Activated B cell treated with CpG ODN at 0.5 μM for 24 hours (primary cell): ENCODE measurements at regions of chr9 and their contacts with region 1.

Region 1: GRCh38 chr9:5437254-5438216 is at the start of gene PLGRKT:
- DNase-seq: peak; percentile 82
- ATAC-seq: peak; percentile 78
- H3K4me3 Mint-ChIP-seq: peak within 1 kb of the TSS; percentile 96
- H3K27ac Mint-ChIP-seq: peak within 1 kb of the TSS; percentile 100
- H3K4me1 Mint-ChIP-seq: peaks cover 59% of the 10 kb centered on the region
- H3K27me3 Mint-ChIP-seq: no peaks in the 10 kb centered on the region
- CTCF ChIP-seq: no peak
- total RNA-seq, gene PLGRKT: 57.1 and 59.7 TPM in 2 replicates

Region 2: DNA sequence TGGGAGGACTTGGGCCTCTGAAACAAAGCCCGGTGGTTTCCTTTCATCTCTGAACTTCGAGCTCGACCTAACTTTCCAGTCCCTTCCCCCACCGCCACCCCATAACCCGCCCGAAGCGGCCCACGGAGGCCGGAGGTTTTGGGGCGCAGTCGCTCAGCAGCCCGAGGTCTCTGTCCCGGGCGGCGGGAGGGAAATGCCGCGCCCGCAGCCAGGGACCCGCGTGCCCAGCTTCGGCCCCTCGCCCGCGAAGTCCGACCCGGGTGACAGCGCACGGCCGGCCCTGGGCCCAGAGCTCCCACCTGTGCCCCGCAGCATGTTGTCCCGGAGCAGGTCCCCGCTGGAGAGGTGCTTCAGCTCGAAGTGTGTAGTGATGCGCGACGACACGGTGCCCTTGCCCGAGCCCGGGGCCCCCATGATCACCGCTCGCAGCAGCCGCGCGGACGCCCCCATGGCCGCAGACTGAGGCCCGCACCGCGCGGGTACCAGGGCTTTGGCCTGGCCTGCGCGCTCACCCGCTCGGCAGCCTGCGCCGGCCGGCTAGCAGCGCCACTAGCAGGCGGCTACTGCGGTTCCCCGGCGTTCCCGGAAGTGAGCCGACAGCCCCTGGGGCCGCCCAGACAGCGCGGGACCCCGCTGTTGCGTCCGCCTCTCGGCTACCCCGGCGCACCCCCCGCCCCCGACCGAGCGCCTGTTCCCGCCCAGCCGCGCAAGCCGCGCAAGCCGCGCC is 696.7 kb before region 1 on chr9 and contains the start of gene AK3:
- CTCF ChIA-PET with region 1: no interaction called
- POLR2A ChIA-PET with region 1: interaction called, 3 read pairs
- intact Hi-C with region 1: loop called (anchors 5 kb)
- DNase-seq: peak; percentile 79
- ATAC-seq: peak; percentile 93
- H3K4me3 Mint-ChIP-seq: peak within 1 kb of the TSS; percentile 90
- H3K27ac Mint-ChIP-seq: peak within 1 kb of the TSS; percentile 83
- H3K4me1 Mint-ChIP-seq: peaks cover 30% of the 10 kb centered on the region
- H3K27me3 Mint-ChIP-seq: no peaks in the 10 kb centered on the region
- CTCF ChIP-seq: no peak
- total RNA-seq, gene AK3: 14.5 and 16.9 TPM in 2 replicates

Region 3: GRCh38 chr9:5186416-5187169 is 250.9 kb before region 1 on chr9:
- CTCF ChIA-PET with region 1: interaction called, 87 read pairs
- POLR2A ChIA-PET with region 1: interaction called, 16 read pairs
- intact Hi-C with region 1: loop called (anchors 1 kb)
- DNase-seq: no peak
- ATAC-seq: peak; percentile 81
- H3K4me3 Mint-ChIP-seq: no peak overlapping the region
- H3K27ac Mint-ChIP-seq: no peak overlapping the region
- H3K4me1 Mint-ChIP-seq: peaks cover 12% of the 10 kb centered on the region
- H3K27me3 Mint-ChIP-seq: no peaks in the 10 kb centered on the region
- CTCF ChIP-seq: no peak

Region 4: DNA sequence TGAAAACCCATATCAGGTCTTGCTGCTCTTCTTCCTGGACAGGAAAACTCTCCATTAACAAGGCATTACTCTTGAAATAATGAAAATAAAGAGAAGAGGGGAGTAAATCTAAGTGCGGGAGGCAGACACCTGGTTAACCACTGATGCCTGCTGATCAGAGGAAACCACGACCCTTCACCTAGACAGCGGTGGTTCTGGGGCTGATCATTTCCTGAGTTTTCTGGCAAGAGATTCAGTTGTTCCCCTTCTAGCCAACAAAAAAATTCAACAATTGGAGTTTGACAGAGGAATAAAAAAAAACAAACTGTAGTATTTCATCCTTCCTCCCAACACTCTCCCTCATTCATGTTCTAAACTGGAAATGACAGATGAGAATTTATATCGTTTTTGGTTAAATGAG is 136.0 kb before region 1 on chr9:
- CTCF ChIA-PET with region 1: no interaction called
- POLR2A ChIA-PET with region 1: no interaction called
- intact Hi-C with region 1: no loop called
- DNase-seq: no peak
- ATAC-seq: no peak
- H3K4me3 Mint-ChIP-seq: no peak overlapping the region
- H3K27ac Mint-ChIP-seq: no peak overlapping the region
- H3K4me1 Mint-ChIP-seq: peaks cover 11% of the 10 kb centered on the region
- H3K27me3 Mint-ChIP-seq: no peaks in the 10 kb centered on the region
- CTCF ChIP-seq: no peak

Region 5: GRCh38 chr9:5459289-5459829 is 21.8 kb after region 1 on chr9:
- CTCF ChIA-PET with region 1: interaction called, 4 read pairs
- POLR2A ChIA-PET with region 1: interaction called, 15 read pairs
- intact Hi-C with region 1: no loop called
- DNase-seq: no peak
- ATAC-seq: peak; percentile 32
- H3K4me3 Mint-ChIP-seq: peak overlapping the region; percentile 20
- H3K27ac Mint-ChIP-seq: peak overlapping the region; percentile 67
- H3K4me1 Mint-ChIP-seq: peaks cover 46% of the 10 kb centered on the region
- H3K27me3 Mint-ChIP-seq: no peaks in the 10 kb centered on the region
- CTCF ChIP-seq: no peak

Region 6: GRCh38 chr9:5582835-5583195 is 145.3 kb after region 1 on chr9:
- CTCF ChIA-PET with region 1: interaction called, 56 read pairs
- POLR2A ChIA-PET with region 1: interaction called, 238 read pairs
- intact Hi-C with region 1: loop called (anchors 1 kb)
- DNase-seq: peak; percentile 45
- ATAC-seq: peak; percentile 62
- H3K4me3 Mint-ChIP-seq: peak overlapping the region; percentile 71
- H3K27ac Mint-ChIP-seq: peak overlapping the region; percentile 99
- H3K4me1 Mint-ChIP-seq: peaks cover 89% of the 10 kb centered on the region
- H3K27me3 Mint-ChIP-seq: no peaks in the 10 kb centered on the region
- CTCF ChIP-seq: no peak

Region 7: DNA sequence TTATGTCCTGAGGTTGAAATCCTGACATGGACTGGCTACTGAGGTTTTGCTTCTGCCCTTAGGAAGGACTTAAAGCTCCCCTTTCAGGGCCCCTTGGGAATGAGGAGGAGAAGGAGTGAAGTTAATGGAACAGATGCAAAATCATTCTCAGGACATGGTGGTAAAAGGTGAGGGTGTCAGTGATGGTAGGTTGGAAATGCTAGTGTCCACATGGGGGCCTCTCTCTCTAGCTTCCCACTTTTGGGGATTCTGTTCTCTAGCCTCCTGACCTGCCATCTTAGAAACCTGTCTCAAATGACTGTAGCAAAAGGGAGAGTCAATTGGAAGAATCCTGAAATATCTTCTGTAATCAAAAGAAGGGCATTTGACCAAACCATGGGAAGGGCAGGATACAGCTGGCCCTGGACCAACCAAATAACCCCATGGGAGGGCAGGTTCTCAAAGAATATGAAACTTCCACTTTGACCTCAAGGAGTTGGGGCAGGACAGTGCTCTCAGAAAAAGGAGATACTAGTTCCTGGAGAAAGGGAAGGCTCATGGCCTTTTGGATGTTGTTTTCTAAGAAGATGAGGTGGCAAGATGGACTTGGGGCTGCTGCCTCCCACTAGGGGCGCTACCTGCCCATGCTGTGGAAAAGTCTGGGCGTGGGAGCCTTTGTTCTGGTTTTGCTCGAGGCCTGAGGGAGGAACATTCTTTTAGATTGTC is 431.9 kb after region 1 on chr9:
- CTCF ChIA-PET with region 1: no interaction called
- POLR2A ChIA-PET with region 1: no interaction called
- intact Hi-C with region 1: no loop called
- DNase-seq: no peak
- ATAC-seq: no peak
- H3K4me3 Mint-ChIP-seq: no peak overlapping the region
- H3K27ac Mint-ChIP-seq: no peak overlapping the region
- H3K4me1 Mint-ChIP-seq: no peaks in the 10 kb centered on the region
- H3K27me3 Mint-ChIP-seq: no peaks in the 10 kb centered on the region
- CTCF ChIP-seq: no peak

Region 8: DNA sequence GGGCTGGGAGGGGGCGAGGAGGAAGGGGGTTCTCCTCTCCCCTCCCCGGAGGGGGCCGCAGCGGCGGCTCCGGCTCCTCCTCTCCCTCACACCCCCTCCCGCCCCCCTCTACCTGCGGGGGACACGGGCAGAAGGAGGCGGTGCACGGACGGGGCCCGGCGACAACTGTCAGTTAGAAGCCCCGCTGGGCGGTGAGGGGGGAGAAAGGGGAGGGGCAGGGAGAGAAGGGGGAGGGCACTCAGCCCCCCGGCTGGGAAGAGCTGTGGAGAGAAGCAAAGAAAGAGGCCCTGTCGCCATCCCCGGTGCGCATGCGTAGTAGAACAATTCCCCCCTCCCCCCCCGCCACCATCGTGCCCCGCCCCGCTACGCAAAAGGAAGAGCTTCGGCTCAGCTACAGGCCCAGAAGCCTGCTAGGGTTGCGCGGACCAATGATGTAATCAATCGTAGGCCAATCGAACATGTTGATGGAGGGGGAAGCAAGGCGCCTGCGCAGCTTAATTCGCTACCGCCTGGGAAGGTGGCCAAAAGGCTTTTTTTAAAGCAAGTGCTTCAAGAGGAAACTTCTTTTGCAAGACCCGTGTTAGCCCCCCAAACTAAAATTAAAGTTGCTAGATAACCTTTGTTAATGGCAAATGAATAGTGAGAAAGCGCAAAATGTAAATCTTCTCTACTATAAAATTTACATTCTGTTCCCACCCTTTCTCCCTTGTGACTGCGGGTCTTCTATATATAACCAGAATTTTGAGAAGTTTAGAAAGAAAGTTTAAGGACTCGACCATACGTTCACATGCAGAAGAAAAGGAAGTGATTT is 570.8 kb after region 1 on chr9:
- CTCF ChIA-PET with region 1: no interaction called
- POLR2A ChIA-PET with region 1: interaction called, 12 read pairs
- intact Hi-C with region 1: loop called (anchors 1 kb)
- DNase-seq: peak; percentile 82
- ATAC-seq: peak; percentile 75
- H3K4me3 Mint-ChIP-seq: peak overlapping the region; percentile 85
- H3K27ac Mint-ChIP-seq: peak overlapping the region; percentile 87
- H3K4me1 Mint-ChIP-seq: peaks cover 57% of the 10 kb centered on the region
- H3K27me3 Mint-ChIP-seq: no peaks in the 10 kb centered on the region
- CTCF ChIP-seq: no peak